ENCODE measurements at regions of chr11 and their contacts with region 1.

Region 1: DNA sequence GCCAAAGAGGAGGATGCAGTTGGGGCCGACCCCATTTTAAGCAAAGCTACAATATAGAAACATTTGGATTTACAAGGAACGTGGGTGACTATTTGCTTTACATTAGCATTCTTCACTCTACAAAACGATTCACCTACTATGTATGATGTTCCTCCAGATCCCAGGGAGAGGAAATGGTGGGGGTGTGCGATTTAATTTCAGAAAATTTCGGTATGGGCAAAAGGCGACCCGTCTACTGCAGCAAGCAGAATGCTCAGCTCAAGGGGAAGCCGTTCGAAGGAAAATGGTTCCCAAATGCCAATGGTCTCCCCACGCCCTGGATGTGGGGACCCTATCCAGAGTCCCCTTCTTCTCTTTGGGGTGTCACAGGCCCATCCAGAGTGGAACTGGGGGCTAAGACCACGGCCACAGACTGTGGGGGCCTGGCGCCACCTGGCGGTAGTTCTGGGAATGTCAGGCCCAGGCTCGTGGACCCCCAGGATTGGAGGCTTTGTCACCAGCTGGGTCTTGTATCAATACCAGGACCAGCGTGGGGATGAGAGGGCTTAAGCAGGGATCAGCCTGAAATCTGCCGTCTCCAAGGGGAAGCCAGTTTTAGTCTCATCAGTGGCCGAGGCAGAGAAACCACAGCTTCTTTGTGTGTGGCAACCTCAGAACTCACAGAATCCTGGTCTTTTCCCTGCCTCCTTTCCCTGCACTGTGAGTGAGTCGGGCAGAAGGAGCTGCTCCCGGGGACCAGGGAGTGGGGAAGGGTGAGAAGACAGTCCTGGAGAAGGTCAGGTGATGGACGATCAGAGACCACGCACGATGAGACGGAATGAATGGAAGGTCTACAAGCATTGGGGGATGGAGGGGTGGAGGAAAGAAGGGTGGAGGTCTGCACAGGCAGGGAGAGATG is 8.4 kb downstream of the LRRC10B start:
- DNase-seq: peak; percentile 88
- CTCF ChIP-seq: peak; percentile 94

Region 2: GRCh38 chr11:61439615-61440014 is 77.3 kb before region 1 on chr11:
- CTCF ChIA-PET with region 1: interaction called, 196 read pairs
- POLR2A ChIA-PET with region 1: no interaction called
- DNase-seq: no peak
- CTCF ChIP-seq: no peak

Region 3: GRCh38 chr11:61477727-61478148 is 39.2 kb before region 1 on chr11:
- CTCF ChIA-PET with region 1: interaction called, 168 read pairs
- POLR2A ChIA-PET with region 1: no interaction called
- DNase-seq: peak; percentile 82
- CTCF ChIP-seq: peak; percentile 89

Region 4: DNA sequence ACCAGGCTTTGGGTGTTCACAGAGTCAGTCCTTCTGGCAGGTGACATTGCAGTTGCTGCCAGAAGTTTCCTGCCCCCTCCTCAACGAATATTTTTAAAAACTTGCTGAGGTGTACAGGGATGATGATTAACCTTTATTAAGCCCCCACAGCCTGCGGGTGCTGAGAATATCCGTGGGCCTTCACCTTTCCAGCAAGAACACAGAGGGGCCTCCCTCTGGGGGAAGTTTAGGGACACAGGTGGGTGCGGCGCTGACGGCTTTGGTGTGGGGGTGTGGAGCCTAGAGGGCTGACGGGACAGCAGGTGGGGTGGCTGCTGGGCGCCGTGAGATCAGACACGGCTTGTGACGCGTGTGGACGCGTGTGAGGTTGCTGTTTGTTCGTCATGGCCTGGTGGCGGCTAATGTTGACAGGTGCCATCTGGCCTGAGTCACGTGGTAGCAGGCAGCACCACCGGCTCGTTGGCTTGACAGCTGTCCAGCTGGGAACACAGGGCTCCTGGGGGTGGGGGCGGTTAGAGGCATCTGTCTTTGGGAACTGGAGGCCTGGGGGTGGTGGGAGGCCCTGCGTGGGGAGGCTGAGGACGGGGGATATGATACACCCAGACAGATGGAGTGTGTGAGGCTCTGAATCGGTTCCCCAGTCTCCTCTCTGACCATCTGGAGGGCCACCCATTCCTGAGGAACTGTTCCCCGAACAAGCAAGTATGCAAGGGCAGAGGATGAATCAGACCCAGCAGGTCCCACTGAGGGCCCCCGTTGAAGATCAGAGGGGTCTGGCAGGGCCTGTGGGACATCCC is 20.9 kb before region 1 on chr11:
- CTCF ChIA-PET with region 1: interaction called, 13 read pairs
- POLR2A ChIA-PET with region 1: no interaction called
- DNase-seq: no peak
- CTCF ChIP-seq: no peak

Region 5: GRCh38 chr11:61526956-61527731 is 10.2 kb after region 1 on chr11:
- CTCF ChIA-PET with region 1: interaction called, 41 read pairs
- POLR2A ChIA-PET with region 1: no interaction called
- DNase-seq: no peak
- CTCF ChIP-seq: no peak

Region 6: GRCh38 chr11:61545341-61545740 is 28.4 kb after region 1 on chr11:
- CTCF ChIA-PET with region 1: interaction called, 12 read pairs
- POLR2A ChIA-PET with region 1: no interaction called
- DNase-seq: peak; percentile 54
- CTCF ChIP-seq: peak; percentile 15